ENCODE measurements at regions of chr1 and their contacts with region 1.

Region 1: DNA sequence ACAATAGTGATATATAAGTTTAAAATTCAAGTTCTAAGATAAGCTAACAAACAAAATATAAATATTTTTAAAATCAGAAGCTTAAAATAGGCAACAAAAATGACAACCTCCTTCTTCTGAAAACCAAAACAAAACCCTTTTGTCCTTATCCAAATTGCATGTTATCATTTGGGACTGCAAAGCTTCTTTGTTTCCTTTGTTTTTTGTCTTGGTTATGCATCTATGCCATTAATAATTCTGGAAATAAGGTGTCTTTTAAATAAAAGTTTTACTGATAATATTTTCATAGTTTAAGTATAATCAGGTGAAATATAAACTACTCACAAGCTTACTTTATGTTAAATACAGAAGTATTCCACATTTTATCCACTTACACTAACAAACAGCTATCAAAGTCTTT is 20.5 kb downstream of the ADSS2 start:
- DNase-seq: no peak
- ATAC-seq: no peak
- H3K4me3 ChIP-seq: no peak overlapping the region
- H3K27ac ChIP-seq: no peak overlapping the region
- H3K4me1 ChIP-seq: no peaks in the 10 kb centered on the region
- H3K27me3 ChIP-seq: no peaks in the 10 kb centered on the region
- CTCF ChIP-seq: no peak
- EP300 ChIP-seq: no peak
- POLR2A ChIP-seq: no peak
- RAD21 ChIP-seq: no peak

Region 2: GRCh38 chr1:244272471-244273261 is 158.5 kb before region 1 on chr1:
- CTCF ChIA-PET with region 1: no interaction called
- POLR2A ChIA-PET with region 1: no interaction called
- RAD21 ChIA-PET with region 1: no interaction called
- SMC1A ChIA-PET with region 1: no interaction called
- in situ Hi-C with region 1: no loop called
- intact Hi-C with region 1: no loop called
- DNase-seq: peak; percentile 69
- ATAC-seq: peak; percentile 94
- H3K4me3 ChIP-seq: no peak overlapping the region
- H3K27ac ChIP-seq: no peak overlapping the region
- H3K4me1 ChIP-seq: no peaks in the 10 kb centered on the region
- H3K27me3 ChIP-seq: no peaks in the 10 kb centered on the region
- CTCF ChIP-seq: peak; percentile 88 to 99 (median 99); a peak in 5 of 6 replicates
- EP300 ChIP-seq: no peak
- POLR2A ChIP-seq: no peak
- RAD21 ChIP-seq: peak; percentile 100

Region 3: DNA sequence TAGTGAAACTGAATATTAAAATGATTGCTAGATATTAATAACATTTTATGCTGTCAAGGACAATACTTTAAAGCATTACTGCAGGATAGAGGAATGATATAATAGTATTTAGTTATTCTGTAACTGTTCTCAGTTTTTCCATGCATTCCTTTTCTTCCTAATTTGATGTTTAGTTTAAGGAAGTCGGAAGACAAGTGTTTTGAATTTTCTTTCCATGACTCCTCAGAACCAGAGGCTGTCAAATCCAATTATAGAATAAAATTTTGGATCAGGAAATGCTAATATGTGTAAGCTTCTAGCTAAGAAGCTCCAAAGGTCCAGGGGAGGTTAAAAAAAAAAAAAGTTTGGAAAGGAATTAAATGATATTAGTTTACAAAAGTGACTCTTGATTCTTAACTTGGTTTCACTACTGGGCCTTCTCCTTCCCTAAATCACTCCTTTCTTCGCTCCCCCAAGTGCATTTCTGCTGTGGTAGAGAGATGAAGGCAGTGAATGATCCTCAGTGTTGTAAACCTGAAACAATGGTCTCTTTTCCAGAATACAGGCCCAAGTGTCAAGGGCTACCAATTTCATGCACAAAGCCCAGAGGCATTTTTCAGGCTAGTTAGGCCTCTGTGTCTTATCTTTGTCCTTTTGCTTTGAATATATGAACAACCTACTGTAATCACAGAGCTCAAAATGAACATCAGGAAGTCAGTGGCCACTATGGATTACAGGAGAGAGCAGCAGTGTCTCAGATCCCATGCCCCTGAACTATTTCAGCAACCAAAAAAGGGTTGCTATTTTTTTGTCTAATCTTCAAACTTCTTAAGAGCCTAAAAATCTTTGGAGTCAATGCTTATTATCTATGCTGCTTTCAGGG is 14.4 kb after region 1 on chr1:
- CTCF ChIA-PET with region 1: no interaction called
- POLR2A ChIA-PET with region 1: interaction called, 6 read pairs
- RAD21 ChIA-PET with region 1: interaction called, 3 read pairs
- SMC1A ChIA-PET with region 1: interaction called, 12 read pairs
- in situ Hi-C with region 1: no loop called
- intact Hi-C with region 1: no loop called
- DNase-seq: no peak
- ATAC-seq: peak; percentile 31
- H3K4me3 ChIP-seq: 0 out of 2 replicates have a peak overlapping the region, but pooled peaks have one; percentile 34
- H3K27ac ChIP-seq: peak overlapping the region; percentile 9; the same call in 1 of the 2 replicates
- H3K4me1 ChIP-seq: peaks cover 4% of the 10 kb centered on the region; the same call in 1 of the 2 replicates
- H3K27me3 ChIP-seq: no peaks in the 10 kb centered on the region
- CTCF ChIP-seq: no peak
- EP300 ChIP-seq: no peak
- POLR2A ChIP-seq: no peak
- RAD21 ChIP-seq: no peak

Measured in GM12878 (cell line).